BJ (cell line): ENCODE measurements at regions of chr1 and their contacts with region 1.

Region 1: DNA sequence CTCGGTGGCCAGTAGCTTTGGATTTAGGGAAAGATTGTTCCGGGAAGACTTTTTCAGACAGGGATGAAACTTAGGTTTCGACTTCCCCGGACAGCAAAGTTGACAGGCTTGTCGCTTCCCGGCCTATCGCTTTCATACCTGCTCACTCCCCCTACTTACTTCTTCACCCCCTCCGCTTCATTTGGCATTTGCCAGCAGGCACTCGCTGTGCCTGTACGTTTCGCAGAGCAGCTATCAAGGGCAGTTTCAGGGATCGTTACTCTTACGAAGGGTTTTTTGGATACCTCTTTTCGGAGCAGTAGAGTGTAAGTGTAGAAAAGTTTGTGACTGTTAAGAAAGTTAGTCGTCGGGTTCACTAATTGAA is 393 bp downstream of the BLZF1 start:
- DNase-seq: no peak
- H3K4me3 ChIP-seq: peak overlapping the region; percentile 73
- H3K27me3 ChIP-seq: no peaks in the 10 kb centered on the region
- CTCF ChIP-seq: no peak

Region 2: GRCh38 chr1:169383449-169383848 is 15.1 kb after region 1 on chr1:
- CTCF ChIA-PET with region 1: no interaction called
- POLR2A ChIA-PET with region 1: interaction called, 10 read pairs
- DNase-seq: no peak
- H3K4me3 ChIP-seq: no peak overlapping the region
- H3K27me3 ChIP-seq: no peaks in the 10 kb centered on the region
- CTCF ChIP-seq: no peak

Region 3: DNA sequence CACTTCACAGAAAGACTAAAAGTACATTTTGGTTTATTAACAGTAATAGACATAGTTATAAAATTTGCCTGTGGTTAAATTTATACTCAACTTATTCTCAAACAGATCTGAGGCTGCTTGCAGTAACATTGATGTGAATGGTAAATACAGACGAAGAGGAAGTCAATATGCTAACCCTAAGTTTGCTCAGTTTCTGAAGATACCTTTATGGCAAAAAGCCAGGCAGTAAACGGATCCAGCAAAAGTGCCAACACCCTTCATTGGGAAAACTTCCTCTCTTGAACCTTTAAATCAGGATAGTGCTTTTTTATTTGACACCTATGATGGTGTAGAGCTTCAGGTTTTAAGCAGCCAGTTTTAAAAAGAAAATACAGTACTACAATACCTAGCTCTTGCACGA is 75.5 kb after region 1 on chr1:
- CTCF ChIA-PET with region 1: no interaction called
- POLR2A ChIA-PET with region 1: no interaction called
- DNase-seq: no peak
- H3K4me3 ChIP-seq: no peak overlapping the region
- H3K27me3 ChIP-seq: no peaks in the 10 kb centered on the region
- CTCF ChIP-seq: no peak

Region 4: DNA sequence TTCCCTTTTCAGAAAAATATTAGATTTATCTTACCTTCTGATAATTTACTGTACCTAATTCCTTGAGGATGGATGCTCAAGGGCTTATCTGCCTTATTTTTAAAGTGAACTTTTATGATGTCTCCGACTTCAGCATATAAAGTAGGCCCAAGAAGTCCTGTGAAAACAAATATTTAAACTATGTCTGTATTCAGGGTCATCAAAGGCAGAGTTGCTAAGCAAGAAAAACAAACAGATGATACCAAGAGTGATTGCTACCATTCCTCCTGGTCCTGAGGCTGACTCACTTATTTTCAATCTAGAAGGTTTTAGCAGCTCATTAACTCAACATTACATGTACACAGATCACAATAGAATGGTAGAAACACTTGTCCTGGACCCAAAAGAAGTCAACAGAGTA is 203.8 kb after region 1 on chr1:
- CTCF ChIA-PET with region 1: no interaction called
- POLR2A ChIA-PET with region 1: no interaction called
- DNase-seq: no peak
- H3K4me3 ChIP-seq: no peak overlapping the region
- H3K27me3 ChIP-seq: no peaks in the 10 kb centered on the region; the same call in 1 of the 2 replicates
- CTCF ChIP-seq: no peak